ENCODE measurements at regions of chr16 and their contacts with region 1.

Region 1: GRCh38 chr16:28277537-28278388 is 14.6 kb upstream of the SBK1 start:
- DNase-seq: peak; percentile 91
- ATAC-seq: peak; percentile 85
- H3K4me3 Mint-ChIP-seq: peak overlapping the region; percentile 60
- H3K27ac Mint-ChIP-seq: peak overlapping the region; percentile 38
- H3K4me1 Mint-ChIP-seq: peaks cover 35% of the 10 kb centered on the region
- H3K27me3 Mint-ChIP-seq: peaks cover 4% of the 10 kb centered on the region

Region 2: GRCh38 chr16:28241924-28242323 is 35.8 kb before region 1 on chr16:
- CTCF ChIA-PET with region 1: no interaction called
- POLR2A ChIA-PET with region 1: no interaction called
- intact Hi-C with region 1: loop called in 1 of 2 experiments (anchors 5 kb)
- DNase-seq: no peak
- ATAC-seq: no peak
- H3K4me3 Mint-ChIP-seq: no peak overlapping the region
- H3K27ac Mint-ChIP-seq: no peak overlapping the region
- H3K4me1 Mint-ChIP-seq: no peaks in the 10 kb centered on the region
- H3K27me3 Mint-ChIP-seq: no peaks in the 10 kb centered on the region

Region 3: GRCh38 chr16:28309811-28310311 is 32.1 kb after region 1 on chr16:
- CTCF ChIA-PET with region 1: interaction called, 76 read pairs
- POLR2A ChIA-PET with region 1: no interaction called
- intact Hi-C with region 1: loop called in 1 of 2 experiments (anchors 1 kb)
- DNase-seq: peak; percentile 92
- ATAC-seq: peak; percentile 91
- H3K4me3 Mint-ChIP-seq: peak overlapping the region; percentile 6
- H3K27ac Mint-ChIP-seq: peak overlapping the region; percentile 91
- H3K4me1 Mint-ChIP-seq: peaks cover 48% of the 10 kb centered on the region
- H3K27me3 Mint-ChIP-seq: no peaks in the 10 kb centered on the region

Region 4: DNA sequence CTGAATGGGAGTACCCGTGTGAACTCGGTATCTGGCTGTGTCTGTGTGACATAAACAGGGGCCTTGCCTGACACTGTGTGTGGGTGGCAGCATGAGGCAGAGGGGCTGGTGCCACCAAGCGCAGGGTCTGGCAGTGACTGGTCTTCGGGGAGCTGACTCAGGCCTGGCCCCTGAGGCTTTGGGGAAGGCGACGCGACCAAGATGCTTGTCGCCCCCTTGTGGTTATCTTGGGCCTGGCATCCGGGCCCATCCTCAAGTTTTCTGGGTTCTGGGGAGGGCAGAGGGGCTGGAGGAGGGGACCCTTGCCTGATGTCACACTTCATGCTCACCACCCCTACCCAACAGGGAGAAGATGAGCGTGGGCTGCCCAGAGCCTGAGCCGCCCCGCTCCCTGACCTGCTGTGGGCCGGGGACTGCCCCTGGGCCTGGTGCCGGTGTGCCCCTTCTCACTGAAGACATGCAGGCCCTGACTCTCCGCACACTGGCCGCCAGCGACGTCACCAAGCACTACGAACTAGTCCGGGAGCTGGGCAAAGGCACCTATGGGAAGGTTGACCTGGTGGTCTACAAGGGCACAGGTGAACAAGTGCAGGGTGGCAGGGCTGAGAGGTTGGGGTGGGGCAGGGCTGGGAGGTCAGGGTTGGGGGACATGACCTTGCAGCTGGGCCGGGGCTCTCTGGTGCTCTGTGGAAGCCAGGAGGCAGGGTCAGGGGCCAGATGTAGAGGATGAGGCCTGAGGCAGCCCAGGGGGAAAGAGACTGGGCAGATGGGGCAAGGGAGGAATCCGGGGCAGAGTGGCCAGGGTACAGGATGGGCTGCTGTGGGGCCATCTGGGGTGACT is 39.5 kb after region 1 on chr16:
- CTCF ChIA-PET with region 1: interaction called, 76 read pairs
- POLR2A ChIA-PET with region 1: interaction called, 3 read pairs
- intact Hi-C with region 1: loop called (anchors 1 kb)
- DNase-seq: peak; percentile 88
- ATAC-seq: peak; percentile 83
- H3K4me3 Mint-ChIP-seq: no peak overlapping the region
- H3K27ac Mint-ChIP-seq: no peak overlapping the region
- H3K4me1 Mint-ChIP-seq: peaks cover 21% of the 10 kb centered on the region
- H3K27me3 Mint-ChIP-seq: no peaks in the 10 kb centered on the region

Measured in activated CD4-positive, alpha-beta T cell treated with anti-CD3 and anti-CD28 coated beads for 36 hours (primary cell).